Mucosa of descending colon (tissue), 3 donors: ENCODE measurements at regions of chr10 and their contacts with region 1.

Region 1: DNA sequence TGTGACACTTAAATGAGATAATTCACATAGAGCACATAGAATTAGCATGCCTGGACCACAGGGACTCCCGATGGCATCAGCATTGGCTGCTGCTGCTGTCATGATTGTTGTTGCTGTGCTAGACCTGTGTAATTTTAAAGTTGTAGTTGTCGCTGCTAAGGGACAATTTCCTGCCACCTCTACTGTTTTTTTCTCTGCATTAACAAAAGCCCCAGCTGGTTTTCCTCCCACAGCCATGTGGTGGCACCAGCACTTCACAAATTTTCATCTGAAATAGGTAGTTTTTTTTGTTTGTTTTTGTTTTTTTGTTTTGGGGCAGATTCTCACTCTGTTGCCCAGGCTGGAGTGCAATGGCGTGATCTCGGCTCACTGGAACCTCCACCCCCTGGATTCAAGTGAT is 25.4 kb upstream of the PRXL2A start:
- DNase-seq: peak in 2 of 3 donors; percentile 36 to 49
- ATAC-seq: peak; percentile 44
- H3K4me3 ChIP-seq: no peak overlapping the region
- H3K4me1 ChIP-seq: no peaks in the 10 kb centered on the region
- CTCF ChIP-seq: peak; percentile 34

Region 2: DNA sequence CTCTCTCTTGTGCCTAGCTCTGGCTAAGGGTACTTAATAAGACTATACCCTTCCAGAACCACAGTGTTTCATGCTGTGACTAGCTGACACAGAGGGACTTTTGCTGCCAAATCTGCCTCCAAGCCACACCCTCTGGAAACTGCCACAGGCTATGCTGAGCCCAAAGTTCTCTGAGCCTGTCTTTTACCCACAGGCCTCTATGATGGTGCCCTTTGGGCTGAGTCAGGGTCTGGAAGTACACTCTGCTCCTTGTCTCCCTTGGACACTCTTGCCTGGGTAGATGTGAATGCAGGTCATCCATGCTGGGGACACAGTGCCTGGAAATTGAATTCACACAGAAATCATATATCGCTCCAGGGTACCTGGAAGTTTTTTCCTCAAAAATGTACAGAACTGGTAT is 49.0 kb before region 1 on chr10:
- intact Hi-C with region 1: no loop called
- DNase-seq: no peak
- ATAC-seq: no peak
- H3K4me3 ChIP-seq: no peak overlapping the region
- H3K4me1 ChIP-seq: no peaks in the 10 kb centered on the region
- CTCF ChIP-seq: no peak

Region 3: DNA sequence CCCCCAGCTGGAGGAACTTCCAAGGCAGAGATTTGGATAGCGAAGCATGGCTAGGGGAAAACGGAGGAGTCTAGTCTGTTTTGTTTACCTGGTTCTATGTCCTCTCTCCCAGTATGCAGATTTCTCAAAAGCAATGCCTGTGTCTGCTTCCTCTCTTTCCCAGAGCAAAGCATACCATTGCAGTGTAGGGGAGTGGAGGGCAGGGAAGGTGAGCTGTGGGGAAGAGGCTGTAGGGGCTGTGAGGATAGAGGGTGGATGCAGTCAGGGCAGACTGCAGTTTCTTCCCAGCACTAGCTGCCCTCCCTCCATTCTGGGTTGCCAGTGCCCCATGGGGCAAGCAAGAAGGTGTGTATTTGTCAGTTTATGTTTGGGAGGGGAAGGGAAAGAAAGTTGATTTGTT is 54.2 kb after region 1 on chr10:
- intact Hi-C with region 1: loop called in 1 of 2 experiments (anchors 10 kb)
- DNase-seq: no peak
- ATAC-seq: no peak
- H3K4me3 ChIP-seq: no peak overlapping the region
- H3K4me1 ChIP-seq: no peaks in the 10 kb centered on the region
- CTCF ChIP-seq: no peak